Psoas muscle (tissue), 8 donors: ENCODE measurements at regions of chr5 and their contacts with region 1.

Region 1: GRCh38 chr5:135729321-135729786 is 105.1 kb upstream of the SLC25A48 start:
- DNase-seq: no peak
- ATAC-seq: peak in 1 of 4 donors; percentile 46
- H3K4me3 ChIP-seq: no peak overlapping the region
- H3K27ac ChIP-seq: no peak overlapping the region
- H3K4me1 ChIP-seq: no peaks in the 10 kb centered on the region
- H3K27me3 ChIP-seq: no peaks in the 10 kb centered on the region
- CTCF ChIP-seq: peak; percentile 11

Region 2: GRCh38 chr5:135560858-135561257 is 168.5 kb before region 1 on chr5:
- intact Hi-C with region 1: loop called in 1 of 2 experiments (anchors 10 kb)
- DNase-seq: peak; percentile 72 to 81
- ATAC-seq: peak; percentile 69 to 88 (median 85)
- H3K4me3 ChIP-seq: no peak overlapping the region
- H3K27ac ChIP-seq: no peak overlapping the region
- H3K4me1 ChIP-seq: no peaks in the 10 kb centered on the region
- H3K27me3 ChIP-seq: peaks cover 0 to 18% (median 4%) of the 10 kb centered on the region in 3 donors
- CTCF ChIP-seq: peak; percentile 79

Region 3: DNA sequence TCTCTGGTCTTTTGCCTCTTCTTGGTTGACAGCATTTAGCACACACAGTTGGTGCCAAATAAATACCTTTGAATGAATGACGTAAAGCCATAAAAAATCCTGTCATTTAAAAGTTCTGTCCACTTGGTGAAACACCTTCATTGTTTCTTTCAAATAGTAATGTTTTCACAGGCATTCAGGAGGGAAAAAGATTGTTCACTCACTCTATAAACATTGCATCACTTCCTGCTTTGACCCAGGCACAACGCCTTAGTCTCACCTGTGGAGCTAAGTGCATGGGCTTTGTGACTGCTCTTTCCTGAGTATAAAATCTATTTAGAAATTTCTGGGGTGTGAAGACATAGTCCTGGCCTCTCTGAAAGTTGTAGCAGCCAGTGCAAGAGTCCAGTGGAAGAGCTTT is 61.7 kb before region 1 on chr5:
- intact Hi-C with region 1: no loop called
- DNase-seq: no peak
- ATAC-seq: no peak
- H3K4me3 ChIP-seq: no peak overlapping the region
- H3K27ac ChIP-seq: no peak overlapping the region
- H3K4me1 ChIP-seq: no peaks in the 10 kb centered on the region
- H3K27me3 ChIP-seq: no peaks in the 10 kb centered on the region
- CTCF ChIP-seq: no peak

Region 4: GRCh38 chr5:136020383-136021015 is 291.1 kb after region 1 on chr5:
- intact Hi-C with region 1: no loop called
- DNase-seq: no peak
- ATAC-seq: peak; percentile 48 to 64 (median 59)
- H3K4me3 ChIP-seq: no peak overlapping the region
- H3K27ac ChIP-seq: peak overlapping the region; percentile 52
- H3K4me1 ChIP-seq: peaks cover 17% of the 10 kb centered on the region
- H3K27me3 ChIP-seq: no peaks in the 10 kb centered on the region
- CTCF ChIP-seq: no peak